ENCODE measurements at regions of chr11 and their contacts with region 1.

Region 1: DNA sequence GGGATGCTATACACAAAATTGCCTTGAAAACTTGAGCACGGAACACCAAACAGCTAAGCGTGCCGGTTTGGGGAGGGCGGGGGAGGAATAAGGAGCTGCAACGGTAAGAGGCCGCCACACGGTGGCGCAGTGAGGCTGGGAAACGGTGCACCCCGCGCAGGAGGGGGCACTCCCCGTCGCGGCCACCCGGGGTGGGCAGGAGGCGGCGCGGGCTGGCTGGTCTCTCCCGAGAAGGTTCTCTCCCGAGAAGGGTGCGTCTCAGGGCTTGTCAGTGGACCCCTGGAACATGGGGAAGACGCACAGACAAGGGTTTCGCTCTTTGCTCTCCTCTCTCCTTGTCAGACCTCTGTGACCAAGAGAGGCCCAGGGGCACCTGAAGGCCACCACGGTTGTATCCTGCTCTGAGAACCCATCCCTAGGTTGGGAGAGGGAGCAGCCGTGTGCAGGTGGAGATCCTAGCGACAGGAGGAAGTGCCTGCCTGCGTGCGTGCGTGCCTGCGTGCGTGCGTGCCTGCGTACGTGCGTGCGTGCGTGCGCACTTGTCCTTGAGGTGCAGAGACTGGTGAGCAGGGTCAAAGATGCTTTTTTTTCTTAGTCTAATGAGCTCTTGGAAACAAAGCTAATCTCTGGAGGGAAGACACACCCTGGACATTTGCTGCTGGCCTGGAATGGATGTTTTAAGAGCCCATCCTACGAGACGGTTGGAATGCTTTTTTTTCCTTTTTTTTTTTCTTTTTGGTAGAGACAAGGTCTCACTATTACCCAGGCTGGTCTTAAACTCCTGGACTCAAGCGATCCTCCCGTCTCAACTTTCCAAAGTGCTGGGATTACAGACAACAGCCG is 18.1 kb upstream of the JAM3 start:
- DNase-seq: peak; percentile 48 to 86
- H3K4me3 ChIP-seq: peak overlapping the region; percentile 26 to 34
- H3K27ac ChIP-seq: no peak overlapping the region
- H3K4me1 ChIP-seq: peaks cover 0 to 37% (median 22%) of the 10 kb centered on the region in 4 donors
- H3K27me3 ChIP-seq: no peaks in the 10 kb centered on the region
- CTCF ChIP-seq: peak; percentile 95 to 97

Region 2: GRCh38 chr11:133864756-133865155 is 186.0 kb before region 1 on chr11:
- intact Hi-C with region 1: no loop called
- DNase-seq: no peak
- H3K4me3 ChIP-seq: no peak overlapping the region
- H3K27ac ChIP-seq: no peak overlapping the region
- H3K4me1 ChIP-seq: no peaks in the 10 kb centered on the region
- H3K27me3 ChIP-seq: peaks cover 0 to 5% of the 10 kb centered on the region in 2 donors
- CTCF ChIP-seq: no peak

Region 3: DNA sequence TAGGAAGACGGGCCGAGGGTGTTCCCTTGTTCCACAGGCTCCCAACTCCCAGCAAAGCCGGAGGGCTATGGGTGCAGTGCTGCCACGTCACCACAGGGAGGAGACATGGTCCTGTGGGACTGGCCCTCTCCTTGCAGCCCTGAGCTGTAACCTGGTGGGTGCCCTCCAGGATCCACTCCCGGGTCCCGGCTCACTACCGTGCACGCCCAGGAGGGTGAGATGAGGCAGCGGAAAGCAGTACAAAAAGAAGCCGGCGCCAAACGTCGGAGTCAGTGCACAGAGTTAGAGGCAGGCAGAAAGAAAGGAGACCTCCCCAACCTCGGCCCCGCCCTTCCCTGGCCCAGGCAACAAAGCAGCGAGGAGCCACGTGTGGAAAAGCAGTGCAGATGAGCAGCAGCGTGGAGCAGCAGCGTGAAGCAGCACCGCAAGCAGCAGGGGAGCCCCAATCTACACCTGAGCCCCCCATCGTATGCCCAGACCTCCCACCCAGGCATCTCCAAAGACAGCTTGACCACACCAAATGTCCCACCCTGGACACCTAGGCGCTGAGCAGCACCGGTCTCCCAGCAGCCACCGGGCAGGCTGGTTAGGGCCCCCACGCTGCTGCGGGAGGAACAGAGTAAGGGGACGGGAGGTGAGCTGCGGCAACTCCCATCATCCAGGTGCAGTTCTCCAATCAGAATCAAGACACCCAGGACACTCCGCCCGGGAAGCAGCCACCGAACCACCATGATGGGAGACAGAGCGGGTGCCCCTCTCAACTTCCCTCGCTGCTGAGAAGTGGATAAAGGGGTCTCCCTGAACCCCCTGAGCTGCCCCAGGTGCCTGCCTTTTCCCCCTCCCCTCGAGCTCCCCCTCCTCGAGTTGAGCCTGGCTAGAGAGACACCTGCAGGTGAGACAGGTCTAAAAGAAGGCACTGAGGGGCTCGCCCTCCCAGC is 122.8 kb before region 1 on chr11:
- intact Hi-C with region 1: loop called (anchors 2 kb)
- DNase-seq: peak; percentile 52 to 81
- H3K4me3 ChIP-seq: no peak overlapping the region
- H3K27ac ChIP-seq: peak overlapping the region in 1 of 2 donors; percentile 29
- H3K4me1 ChIP-seq: peaks cover 0 to 16% (median 10%) of the 10 kb centered on the region in 4 donors
- H3K27me3 ChIP-seq: no peaks in the 10 kb centered on the region
- CTCF ChIP-seq: peak; percentile 79 to 86

Region 4: DNA sequence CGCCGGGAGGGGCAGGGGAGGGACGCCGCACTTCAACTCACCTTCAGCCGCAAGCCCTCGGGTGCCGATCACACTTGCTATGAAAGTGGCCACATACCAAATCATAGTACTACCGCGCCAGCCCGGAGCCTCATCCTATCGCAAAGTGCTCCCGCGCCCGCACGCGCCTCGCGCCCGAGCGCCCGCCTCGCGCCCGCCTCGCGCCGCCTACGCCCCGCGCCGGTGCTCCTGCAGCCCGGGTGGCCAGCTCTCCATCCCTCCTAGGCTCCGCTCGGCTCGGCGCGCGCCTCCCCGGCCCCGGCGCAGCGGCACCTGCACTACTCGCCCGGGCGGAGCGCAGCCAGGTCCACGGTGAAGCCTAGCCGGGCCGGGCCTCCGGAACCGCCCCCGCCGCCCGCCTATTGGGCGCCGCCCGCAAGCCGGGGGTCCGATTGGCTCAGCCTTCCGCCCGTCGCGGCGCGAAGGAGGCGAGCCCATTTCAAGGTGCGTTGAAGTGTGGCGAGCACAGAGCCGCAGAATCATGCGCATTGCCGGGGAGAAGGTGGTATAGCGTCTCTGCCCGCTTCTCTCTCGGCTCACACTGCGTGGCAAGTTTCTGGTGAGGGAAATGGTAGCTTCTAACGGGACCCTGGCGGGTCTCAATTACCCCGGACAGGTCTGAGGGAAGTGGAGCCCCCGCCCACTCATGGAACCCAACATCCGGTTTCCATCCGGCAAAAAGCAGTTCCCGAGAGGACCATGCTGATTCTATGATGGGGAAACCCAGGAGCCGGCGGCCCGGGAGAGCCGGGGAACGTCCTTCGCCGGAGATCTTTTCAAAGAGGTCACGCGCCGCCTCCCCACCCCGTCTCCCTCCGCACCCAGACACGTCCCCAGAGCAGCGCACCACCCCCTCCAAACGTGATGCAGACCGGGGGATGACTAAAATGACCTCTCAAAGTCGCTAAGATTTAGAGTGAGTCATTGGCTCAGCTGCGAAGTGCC is 93.8 kb before region 1 on chr11 and contains the start of gene IGSF9B:
- intact Hi-C with region 1: loop called (anchors 2 kb)
- DNase-seq: peak; percentile 76 to 93
- H3K4me3 ChIP-seq: peak within 1 kb of the TSS; percentile 69 to 88
- H3K27ac ChIP-seq: peak within 1 kb of the TSS; percentile 95 to 96
- H3K4me1 ChIP-seq: peaks cover 0 to 44% (median 41%) of the 10 kb centered on the region in 4 donors
- H3K27me3 ChIP-seq: no peaks in the 10 kb centered on the region
- CTCF ChIP-seq: no peak